Endothelial cell of umbilical vein (primary cell): ENCODE measurements at regions of chr10 and their contacts with region 1.

Region 1: DNA sequence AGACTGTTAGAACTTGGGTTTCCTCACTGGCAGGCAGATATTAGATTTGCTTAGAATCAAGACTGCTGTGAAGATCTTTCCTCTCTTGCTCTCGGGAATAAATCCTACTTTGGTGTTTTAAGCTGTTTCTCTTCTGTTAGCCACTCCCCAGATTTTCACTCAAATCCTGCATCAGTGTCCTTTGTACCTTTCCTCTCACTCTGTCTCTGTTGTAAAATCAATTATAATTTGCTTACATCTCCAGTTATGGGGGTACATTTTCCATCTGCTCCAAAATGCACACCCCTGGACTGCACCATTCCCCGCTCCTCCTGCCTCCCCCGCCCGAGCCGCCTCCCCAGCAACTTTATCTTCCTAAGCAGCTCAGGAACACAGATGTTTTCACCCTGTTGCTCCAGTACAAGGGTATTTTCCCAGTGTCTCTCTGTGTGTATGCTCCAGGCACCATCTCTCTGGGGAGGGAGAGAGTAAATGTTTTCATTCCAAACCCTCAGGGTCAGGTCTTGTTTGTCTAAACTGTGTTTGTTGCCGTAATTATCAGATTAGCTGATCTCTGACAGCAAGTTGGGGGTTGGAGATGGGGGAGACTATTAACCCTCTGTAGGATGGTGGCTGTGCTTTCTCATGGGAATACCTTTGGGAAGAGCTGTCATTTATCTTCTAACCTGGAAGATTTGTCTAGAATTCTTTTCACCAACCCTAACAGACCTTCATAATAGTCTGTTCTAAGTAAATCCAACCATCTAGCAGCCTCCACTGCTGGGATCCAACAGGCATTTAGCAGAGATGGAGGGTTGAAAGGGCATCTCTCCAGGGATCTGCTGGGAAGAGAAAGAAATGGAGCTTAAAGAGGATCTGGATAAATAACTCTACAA is 20.4 kb upstream of the GOT1 start:
- DNase-seq: no peak
- H3K4me3 ChIP-seq: no peak overlapping the region
- H3K27ac ChIP-seq: no peak overlapping the region
- H3K4me1 ChIP-seq: no peaks in the 10 kb centered on the region
- H3K27me3 ChIP-seq: peaks cover 55 to 78% of the 10 kb centered on the region in 2 experiments
- CTCF ChIP-seq: no peak
- POLR2A ChIP-seq: no peak

Region 2: GRCh38 chr10:99412099-99412498 is 38.8 kb before region 1 on chr10:
- CTCF ChIA-PET with region 1: no interaction called
- POLR2A ChIA-PET with region 1: no interaction called
- dilution Hi-C with region 1: no loop called
- intact Hi-C with region 1: loop called (anchors 1 kb)
- DNase-seq: no peak
- H3K4me3 ChIP-seq: no peak overlapping the region
- H3K27ac ChIP-seq: no peak overlapping the region
- H3K4me1 ChIP-seq: no peaks in the 10 kb centered on the region
- H3K27me3 ChIP-seq: no peaks in the 10 kb centered on the region
- CTCF ChIP-seq: no peak
- POLR2A ChIP-seq: no peak

Region 3: DNA sequence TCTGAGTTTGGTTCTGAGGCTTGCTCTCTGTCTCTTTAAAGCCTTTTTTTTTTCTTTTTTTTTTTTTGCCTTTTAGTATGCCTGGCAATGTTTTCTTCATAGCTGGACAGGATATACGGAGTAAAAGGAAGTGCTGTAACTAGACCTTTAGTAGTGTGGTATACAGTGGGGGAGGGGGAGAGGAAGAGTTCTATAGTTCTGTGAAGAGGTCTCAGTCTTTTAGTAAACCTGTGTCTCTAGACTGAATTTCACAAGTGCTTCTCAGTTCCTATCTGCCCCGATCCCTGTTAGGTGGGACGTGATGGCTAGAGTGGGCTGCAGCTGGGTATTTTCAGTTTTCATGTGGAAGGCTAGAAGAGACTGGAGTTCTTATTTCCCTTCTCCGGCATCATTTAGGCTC is 328.5 kb after region 1 on chr10:
- CTCF ChIA-PET with region 1: no interaction called
- POLR2A ChIA-PET with region 1: no interaction called
- dilution Hi-C with region 1: no loop called
- intact Hi-C with region 1: no loop called
- DNase-seq: peak; percentile 95
- H3K4me3 ChIP-seq: peak overlapping the region; percentile 0 to 75 (median 42)
- H3K27ac ChIP-seq: peak overlapping the region; percentile 100
- H3K4me1 ChIP-seq: peaks cover 79% of the 10 kb centered on the region
- H3K27me3 ChIP-seq: no peaks in the 10 kb centered on the region
- CTCF ChIP-seq: no peak
- POLR2A ChIP-seq: peak; percentile 41